ENCODE measurements at regions of chr3 and their contacts with region 1.

Region 1: DNA sequence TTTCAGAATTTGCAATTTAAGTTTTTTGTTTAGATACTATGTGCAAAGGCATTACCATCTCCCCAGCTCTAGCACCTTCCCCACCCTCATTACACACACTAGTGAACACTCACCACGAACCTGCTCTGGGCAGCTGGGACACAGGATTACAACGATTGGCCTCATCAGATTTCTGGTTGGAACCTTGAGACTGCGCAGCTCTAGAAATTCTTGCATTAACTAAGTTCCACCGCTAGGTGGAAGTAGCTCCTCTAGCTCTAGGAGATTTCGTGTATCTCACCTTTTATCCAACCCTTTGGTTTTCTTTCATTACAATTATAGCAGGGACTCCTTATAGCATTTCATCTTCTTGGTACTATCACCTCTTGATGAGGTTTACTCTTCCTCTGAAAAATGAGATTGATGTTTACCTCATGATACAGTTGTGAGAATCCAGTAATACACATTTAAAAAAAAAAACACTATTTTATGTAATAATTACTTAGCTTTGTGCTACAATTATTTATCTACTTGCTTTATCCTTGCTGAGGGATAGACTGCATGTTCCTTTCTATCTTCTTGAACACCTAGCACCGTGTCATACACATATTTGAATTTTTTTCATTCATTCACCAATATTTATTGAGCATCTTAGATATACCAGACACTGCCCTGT is 28.7 kb upstream of the PLOD2 start:
- DNase-seq: no peak
- ATAC-seq: peak; percentile 67 to 82 (median 74)
- H3K4me3 ChIP-seq: no peak overlapping the region
- H3K27ac ChIP-seq: no peak overlapping the region
- H3K4me1 ChIP-seq: no peaks in the 10 kb centered on the region
- H3K27me3 ChIP-seq: no peaks in the 10 kb centered on the region
- CTCF ChIP-seq: peak; percentile 76

Region 2: DNA sequence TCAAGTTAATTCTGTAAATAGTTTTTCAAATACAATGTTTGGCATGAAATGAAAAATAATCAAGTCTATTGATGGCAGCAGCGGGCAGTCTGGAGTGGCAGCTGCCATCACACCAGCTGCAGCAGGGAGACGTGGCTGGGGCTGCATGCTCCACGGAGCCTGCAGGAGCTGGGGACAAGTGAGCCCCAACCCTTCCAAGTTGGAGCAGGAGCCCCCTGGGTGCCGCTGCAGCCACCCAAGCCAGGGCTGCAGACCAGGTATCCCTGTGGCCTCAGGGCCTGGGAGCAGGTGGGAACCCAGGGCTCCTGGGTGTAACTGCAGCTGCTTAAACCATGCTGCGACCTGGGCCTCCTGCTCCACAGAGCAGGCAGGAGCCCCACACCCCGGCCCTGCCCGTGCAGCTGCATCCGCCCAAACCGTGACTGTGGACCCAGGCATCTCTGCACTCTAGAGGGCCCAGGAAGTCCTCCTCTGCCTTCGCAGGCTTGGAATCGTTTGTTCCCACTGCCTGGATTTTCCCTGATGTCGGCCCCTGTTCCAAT is 286.1 kb before region 1 on chr3:
- intact Hi-C with region 1: no loop called
- DNase-seq: no peak
- ATAC-seq: peak in 1 of 4 donors; percentile 33
- H3K4me3 ChIP-seq: no peak overlapping the region
- H3K27ac ChIP-seq: no peak overlapping the region
- H3K4me1 ChIP-seq: no peaks in the 10 kb centered on the region
- H3K27me3 ChIP-seq: no peaks in the 10 kb centered on the region
- CTCF ChIP-seq: no peak

Region 3: GRCh38 chr3:146065573-146066006 is 124.1 kb before region 1 on chr3:
- intact Hi-C with region 1: loop called (anchors 2 to 10 kb)
- DNase-seq: no peak
- ATAC-seq: no peak
- H3K4me3 ChIP-seq: no peak overlapping the region
- H3K27ac ChIP-seq: no peak overlapping the region
- H3K4me1 ChIP-seq: no peaks in the 10 kb centered on the region
- H3K27me3 ChIP-seq: no peaks in the 10 kb centered on the region
- CTCF ChIP-seq: peak; percentile 80

Measured in psoas muscle (tissue), 8 donors.